ENCODE measurements at regions of chr11 and their contacts with region 1.

Region 1: DNA sequence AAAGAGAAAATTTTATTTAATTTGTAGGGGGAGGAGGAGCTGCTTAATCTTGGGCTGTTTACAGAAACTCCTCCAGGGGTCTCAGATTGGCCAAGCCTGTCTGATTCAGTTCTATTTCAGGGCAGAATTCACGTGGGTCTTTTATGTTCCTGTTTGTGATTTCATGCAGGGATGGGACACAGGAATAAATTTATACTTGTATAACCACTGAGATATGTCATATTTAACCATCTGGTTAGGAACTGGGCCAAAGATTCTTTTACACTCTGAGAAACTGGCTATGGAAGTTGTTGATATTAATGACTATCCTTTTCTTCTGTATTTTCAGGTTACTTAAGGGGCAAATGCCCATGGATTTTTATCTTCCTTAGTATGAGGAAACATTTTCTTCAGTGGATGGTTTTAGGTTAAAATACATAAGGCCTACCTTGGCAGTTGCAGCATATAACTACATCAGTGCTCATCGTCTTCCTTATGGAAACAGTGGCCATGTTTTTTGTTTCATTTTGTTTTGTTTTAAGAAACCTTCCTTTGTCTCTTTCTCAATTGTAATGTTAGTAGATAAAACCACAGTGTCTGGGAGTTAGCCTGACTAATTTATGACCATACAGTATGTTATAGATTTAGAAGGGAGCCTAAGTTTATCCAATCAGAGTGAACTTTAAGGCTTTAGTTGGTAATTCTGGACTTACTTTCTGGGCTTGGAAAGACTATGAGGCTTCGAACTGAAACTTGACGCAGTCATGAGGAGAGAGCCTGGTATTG is 132.4 kb upstream of the ANO3 start:
- DNase-seq: peak; percentile 66
- ATAC-seq: peak; percentile 27
- H3K4me3 ChIP-seq: no peak overlapping the region
- H3K27ac ChIP-seq: peak overlapping the region; percentile 49; the same call in 1 of the 2 replicates
- H3K4me1 ChIP-seq: peaks cover 4% of the 10 kb centered on the region
- H3K27me3 ChIP-seq: no peaks in the 10 kb centered on the region
- CTCF ChIP-seq: no peak
- POLR2A ChIP-seq: no peak
- RAD21 ChIP-seq: no peak

Region 2: DNA sequence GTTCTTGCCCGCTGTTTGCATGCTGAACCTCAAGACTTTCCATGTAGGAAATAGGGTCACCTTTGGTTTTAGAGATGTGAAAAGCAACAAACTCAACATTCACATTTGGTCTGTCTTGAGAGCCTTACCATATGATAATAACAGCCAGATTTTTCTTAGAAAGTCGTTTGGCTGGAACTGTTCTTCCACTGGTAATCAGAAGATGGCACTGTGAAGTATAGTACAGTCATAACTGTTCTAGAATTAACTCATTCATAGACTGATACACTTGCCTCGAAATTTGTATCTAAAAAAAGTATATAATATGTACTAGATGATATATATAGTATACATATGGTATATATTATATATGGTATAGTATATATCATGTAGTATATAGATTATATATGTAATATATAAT is 1690.4 kb before region 1 on chr11:
- CTCF ChIA-PET with region 1: no interaction called
- POLR2A ChIA-PET with region 1: no interaction called
- dilution Hi-C with region 1: no loop called
- in situ Hi-C with region 1: loop called (anchors 25 kb)
- intact Hi-C with region 1: no loop called
- DNase-seq: peak; percentile 41
- ATAC-seq: peak; percentile 84
- H3K4me3 ChIP-seq: no peak overlapping the region
- H3K27ac ChIP-seq: no peak overlapping the region
- H3K4me1 ChIP-seq: no peaks in the 10 kb centered on the region; the same call in 1 of the 2 replicates
- H3K27me3 ChIP-seq: no peaks in the 10 kb centered on the region
- CTCF ChIP-seq: peak; percentile 57
- POLR2A ChIP-seq: no peak
- RAD21 ChIP-seq: peak; percentile 59

Region 3: DNA sequence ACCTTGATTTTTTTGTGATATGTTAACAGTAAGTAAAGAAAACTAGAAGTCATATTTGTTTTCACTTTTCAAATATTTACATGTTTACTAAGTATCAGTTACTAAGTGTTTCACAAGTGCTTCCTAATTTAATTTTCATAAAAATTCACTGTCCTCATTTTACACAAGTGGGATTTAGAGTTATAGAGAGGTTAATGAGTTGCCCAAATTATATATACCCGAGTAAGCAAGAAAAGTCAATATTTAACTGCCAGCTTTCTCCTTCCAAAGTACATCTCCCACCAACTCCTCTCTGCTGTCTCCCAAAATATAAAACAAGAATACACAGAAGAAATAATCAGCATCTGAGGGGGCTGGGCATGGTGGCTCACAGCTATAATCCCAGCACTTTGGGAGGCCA is 764.3 kb before region 1 on chr11:
- CTCF ChIA-PET with region 1: no interaction called
- POLR2A ChIA-PET with region 1: no interaction called
- dilution Hi-C with region 1: no loop called
- in situ Hi-C with region 1: no loop called
- intact Hi-C with region 1: no loop called
- DNase-seq: no peak
- ATAC-seq: no peak
- H3K4me3 ChIP-seq: no peak overlapping the region
- H3K27ac ChIP-seq: no peak overlapping the region
- H3K4me1 ChIP-seq: no peaks in the 10 kb centered on the region
- H3K27me3 ChIP-seq: no peaks in the 10 kb centered on the region
- CTCF ChIP-seq: no peak
- POLR2A ChIP-seq: no peak
- RAD21 ChIP-seq: no peak

Region 4: DNA sequence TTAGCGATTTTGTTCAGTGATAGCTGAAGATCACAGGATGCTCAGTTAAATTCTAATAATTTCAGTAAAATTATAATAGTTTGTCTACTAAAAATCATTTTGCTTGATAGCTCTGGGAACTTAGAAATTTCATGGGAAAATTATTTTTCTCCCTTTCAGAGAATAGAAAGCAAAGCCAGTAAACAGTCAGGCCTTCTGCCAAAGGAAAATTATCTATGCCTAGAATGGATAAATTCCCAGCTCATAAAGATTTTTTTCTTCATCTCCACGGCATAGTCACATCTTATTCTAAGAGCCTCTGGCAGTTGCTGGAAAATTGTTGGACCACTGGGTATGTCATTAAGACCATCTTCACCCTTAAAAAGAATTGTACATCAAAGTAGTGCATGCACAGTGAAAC is 37.2 kb before region 1 on chr11:
- CTCF ChIA-PET with region 1: no interaction called
- POLR2A ChIA-PET with region 1: no interaction called
- dilution Hi-C with region 1: no loop called
- in situ Hi-C with region 1: no loop called
- intact Hi-C with region 1: no loop called
- DNase-seq: no peak
- ATAC-seq: no peak
- H3K4me3 ChIP-seq: no peak overlapping the region
- H3K27ac ChIP-seq: no peak overlapping the region
- H3K4me1 ChIP-seq: no peaks in the 10 kb centered on the region
- H3K27me3 ChIP-seq: no peaks in the 10 kb centered on the region
- CTCF ChIP-seq: no peak
- POLR2A ChIP-seq: no peak
- RAD21 ChIP-seq: no peak

Region 5: DNA sequence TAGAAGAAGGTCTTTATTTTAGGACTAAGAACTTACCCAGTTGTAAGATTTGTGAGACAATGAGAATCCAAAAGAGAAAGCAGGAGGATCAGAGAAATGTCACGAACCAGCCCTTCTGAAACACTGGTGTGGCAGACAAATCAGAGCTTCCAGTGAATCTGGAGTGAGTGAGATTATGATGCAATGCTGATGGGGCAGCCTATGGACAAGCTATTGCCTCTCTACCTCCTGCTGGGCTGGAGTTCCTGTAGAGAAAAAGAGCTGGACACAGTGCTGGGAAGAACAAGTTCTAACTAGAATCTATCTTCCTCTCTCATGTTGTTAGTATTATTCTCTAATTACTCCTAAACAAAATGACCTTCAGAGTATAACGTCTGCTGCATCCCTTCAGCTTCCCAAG is 120.4 kb after region 1 on chr11:
- CTCF ChIA-PET with region 1: no interaction called
- POLR2A ChIA-PET with region 1: no interaction called
- dilution Hi-C with region 1: no loop called
- in situ Hi-C with region 1: no loop called
- intact Hi-C with region 1: no loop called
- DNase-seq: no peak
- ATAC-seq: peak; percentile 54
- H3K4me3 ChIP-seq: no peak overlapping the region
- H3K27ac ChIP-seq: no peak overlapping the region
- H3K4me1 ChIP-seq: no peaks in the 10 kb centered on the region
- H3K27me3 ChIP-seq: no peaks in the 10 kb centered on the region
- CTCF ChIP-seq: no peak
- POLR2A ChIP-seq: no peak
- RAD21 ChIP-seq: no peak